ENCODE measurements at regions of chr6 and their contacts with region 1.

Region 1: DNA sequence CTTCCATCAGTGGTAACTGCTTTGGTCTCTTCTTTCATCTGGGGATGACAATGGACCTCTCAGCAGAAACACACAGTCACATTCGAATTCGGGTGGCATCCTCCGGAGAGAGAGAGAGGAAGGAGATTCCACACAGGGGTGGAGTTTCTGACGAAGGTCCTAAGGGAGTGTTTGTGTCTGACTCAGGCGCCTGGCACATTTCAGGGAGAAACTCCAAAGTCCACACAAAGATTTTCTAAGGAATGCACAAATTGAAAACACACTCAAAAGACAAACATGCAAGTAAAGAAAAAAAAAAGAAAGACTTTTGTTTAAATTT is 6.1 kb downstream of the EDN1 start:
- DNase-seq: peak; percentile 83
- ATAC-seq: peak; percentile 84
- H3K4me3 ChIP-seq: no peak overlapping the region
- H3K27ac ChIP-seq: peak overlapping the region; percentile 6
- H3K4me1 ChIP-seq: peaks cover 17% of the 10 kb centered on the region
- H3K27me3 ChIP-seq: no peaks in the 10 kb centered on the region
- CTCF ChIP-seq: no peak
- POLR2A ChIP-seq: no peak
- RAD21 ChIP-seq: no peak

Region 2: GRCh38 chr6:12595161-12595811 is 299.1 kb after region 1 on chr6:
- CTCF ChIA-PET with region 1: no interaction called
- POLR2A ChIA-PET with region 1: no interaction called
- dilution Hi-C with region 1: no loop called
- in situ Hi-C with region 1: loop called (anchors 5 kb)
- intact Hi-C with region 1: no loop called
- DNase-seq: peak; percentile 52
- ATAC-seq: peak; percentile 32; the same call in 1 of the 2 replicates
- H3K4me3 ChIP-seq: no peak overlapping the region
- H3K27ac ChIP-seq: no peak overlapping the region
- H3K4me1 ChIP-seq: peaks cover 5% of the 10 kb centered on the region
- H3K27me3 ChIP-seq: no peaks in the 10 kb centered on the region
- CTCF ChIP-seq: no peak
- POLR2A ChIP-seq: no peak
- RAD21 ChIP-seq: no peak

Measured in IMR-90 (cell line).